Ascending aorta (tissue), 2 donors: ENCODE measurements at regions of chr1 and their contacts with region 1.

Region 1: DNA sequence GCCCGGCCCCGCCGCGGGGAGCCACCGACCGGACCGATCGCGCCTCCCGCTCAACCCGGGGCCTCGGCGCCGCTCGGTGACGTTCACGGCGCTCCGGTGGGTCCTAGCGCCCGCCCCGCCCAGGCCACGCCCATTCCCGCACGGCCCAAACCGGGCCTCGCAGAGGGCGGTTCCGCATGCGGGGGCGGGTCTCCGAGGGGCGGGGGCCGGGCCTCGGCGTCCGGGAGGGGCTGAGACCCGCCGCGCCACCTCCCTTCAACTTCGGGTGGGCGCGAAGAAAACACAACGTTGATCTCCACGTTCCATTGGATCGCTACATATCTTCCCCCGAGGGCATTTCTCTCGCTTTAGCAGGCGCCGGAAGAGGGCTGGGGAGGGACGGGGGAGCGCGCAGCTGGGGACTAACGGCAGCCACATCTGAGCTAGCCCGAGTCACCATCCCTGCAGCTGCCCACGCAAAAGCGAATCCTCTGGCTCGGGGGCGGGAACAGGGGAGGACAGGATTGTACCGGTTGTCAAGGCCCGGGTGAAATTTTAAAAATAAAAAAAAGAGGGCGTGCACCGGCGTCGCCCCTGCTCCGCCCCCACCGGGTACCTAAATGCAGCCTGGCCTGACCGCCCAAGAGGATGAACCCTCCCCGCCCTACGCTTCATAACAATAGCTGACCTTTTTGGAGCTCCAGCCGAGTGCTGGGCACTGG is at the start of gene MAD2L2:
- DNase-seq: peak; percentile 37 to 91
- H3K4me3 ChIP-seq: peak within 1 kb of the TSS; percentile 81 to 90
- H3K27ac ChIP-seq: peak within 1 kb of the TSS; percentile 68 to 89
- H3K4me1 ChIP-seq: peaks cover 0 to 5% of the 10 kb centered on the region in 2 donors
- H3K27me3 ChIP-seq: no peaks in the 10 kb centered on the region
- CTCF ChIP-seq: peak in 1 of 3 experiments; percentile 1
- total RNA-seq, gene MAD2L2: 18.3 TPM

Region 2: GRCh38 chr1:11650331-11650991 is 30.8 kb before region 1 on chr1:
- intact Hi-C with region 1: loop called (anchors 1 kb)
- DNase-seq: peak; percentile 43 to 88
- H3K4me3 ChIP-seq: peak overlapping the region in 1 of 2 donors; percentile 47
- H3K27ac ChIP-seq: no peak overlapping the region
- H3K4me1 ChIP-seq: peaks cover 11 to 12% of the 10 kb centered on the region in 2 donors
- H3K27me3 ChIP-seq: no peaks in the 10 kb centered on the region
- CTCF ChIP-seq: peak; percentile 67 to 84 (median 78)

Region 3: DNA sequence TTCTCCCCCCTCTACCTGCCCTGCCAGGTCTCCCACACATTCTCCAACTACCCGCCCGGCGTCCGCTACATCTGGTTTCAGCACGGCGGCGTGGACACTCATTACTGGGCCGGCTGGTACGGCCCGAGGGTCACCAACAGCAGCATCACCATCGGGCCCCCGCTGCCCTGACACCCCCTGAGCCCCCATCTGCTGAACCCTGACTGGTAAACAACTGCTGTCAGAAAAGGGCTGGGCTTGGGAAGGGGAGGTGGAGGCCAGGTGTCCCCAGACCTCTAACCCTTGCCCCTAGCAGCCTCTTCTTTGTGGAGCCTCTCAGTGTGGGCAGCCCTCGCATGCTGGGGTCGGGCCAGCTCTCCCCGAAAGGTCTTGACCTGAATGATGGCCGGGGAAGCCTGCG is 20.1 kb before region 1 on chr1:
- intact Hi-C with region 1: loop called (anchors 1 kb)
- DNase-seq: no peak
- H3K4me3 ChIP-seq: no peak overlapping the region
- H3K27ac ChIP-seq: no peak overlapping the region
- H3K4me1 ChIP-seq: peaks cover 0 to 2% of the 10 kb centered on the region in 2 donors
- H3K27me3 ChIP-seq: no peaks in the 10 kb centered on the region
- CTCF ChIP-seq: no peak

Region 4: GRCh38 chr1:11790880-11791715 is 109.9 kb after region 1 on chr1:
- intact Hi-C with region 1: loop called (anchors 5 kb)
- DNase-seq: peak; percentile 89 to 98
- H3K4me3 ChIP-seq: peak overlapping the region in 1 of 2 donors; percentile 23
- H3K27ac ChIP-seq: peak overlapping the region; percentile 88 to 91
- H3K4me1 ChIP-seq: peaks cover 26 to 51% of the 10 kb centered on the region in 2 donors
- H3K27me3 ChIP-seq: no peaks in the 10 kb centered on the region
- CTCF ChIP-seq: no peak